A673 (cell line): ENCODE measurements at regions of chr5 and their contacts with region 1.

Region 1: GRCh38 chr5:140346348-140347101 is at the start of gene HBEGF:
- DNase-seq: peak; percentile 70
- H3K4me3 ChIP-seq: peak within 1 kb of the TSS; percentile 76
- H3K27ac ChIP-seq: peak within 1 kb of the TSS; percentile 57
- H3K4me1 ChIP-seq: peaks cover 34% of the 10 kb centered on the region
- H3K27me3 ChIP-seq: no peaks in the 10 kb centered on the region
- CTCF ChIP-seq: peak; percentile 37; the same call in 1 of the 2 replicates
- total RNA-seq, gene HBEGF: 12.0 and 14.7 TPM in 2 replicates

Region 2: DNA sequence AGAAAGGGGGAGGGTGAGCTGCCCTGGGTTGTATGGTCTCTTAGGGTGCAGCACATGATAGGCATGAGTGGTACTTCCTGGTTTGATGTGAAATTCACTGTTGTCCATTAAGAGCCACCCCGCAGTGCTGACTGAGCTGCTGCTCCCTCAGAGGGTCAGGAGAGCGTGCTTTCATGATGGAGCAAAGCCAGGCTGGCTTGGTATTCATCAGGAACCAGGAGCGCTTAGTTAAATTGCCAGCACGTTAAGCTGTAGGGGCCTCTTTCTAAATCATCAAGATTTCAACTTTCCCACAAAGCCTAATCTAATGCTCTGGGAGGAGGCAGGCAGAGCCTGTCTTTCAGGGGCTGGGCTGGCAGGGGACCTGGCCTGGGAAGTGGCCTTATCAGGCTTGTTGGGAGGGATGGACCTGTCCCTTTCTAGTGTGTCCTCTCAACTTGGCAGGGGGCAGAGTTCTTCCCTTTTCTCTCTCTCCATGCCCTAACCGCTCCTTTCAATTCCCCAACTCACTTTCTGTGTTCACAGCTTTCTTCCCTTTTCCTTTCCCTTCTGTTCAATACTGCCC is 163.6 kb before region 1 on chr5:
- CTCF ChIA-PET with region 1: no interaction called
- POLR2A ChIA-PET with region 1: no interaction called
- intact Hi-C with region 1: no loop called
- DNase-seq: peak; percentile 34
- H3K4me3 ChIP-seq: no peak overlapping the region
- H3K27ac ChIP-seq: no peak overlapping the region
- H3K4me1 ChIP-seq: peaks cover 16% of the 10 kb centered on the region
- H3K27me3 ChIP-seq: no peaks in the 10 kb centered on the region
- CTCF ChIP-seq: no peak

Region 3: GRCh38 chr5:140293091-140293848 is 53.3 kb before region 1 on chr5:
- CTCF ChIA-PET with region 1: no interaction called
- POLR2A ChIA-PET with region 1: no interaction called
- intact Hi-C with region 1: loop called (anchors 5 kb)
- DNase-seq: no peak
- H3K4me3 ChIP-seq: no peak overlapping the region
- H3K27ac ChIP-seq: peak overlapping the region; percentile 38
- H3K4me1 ChIP-seq: peaks cover 59% of the 10 kb centered on the region
- H3K27me3 ChIP-seq: no peaks in the 10 kb centered on the region
- CTCF ChIP-seq: no peak

Region 4: DNA sequence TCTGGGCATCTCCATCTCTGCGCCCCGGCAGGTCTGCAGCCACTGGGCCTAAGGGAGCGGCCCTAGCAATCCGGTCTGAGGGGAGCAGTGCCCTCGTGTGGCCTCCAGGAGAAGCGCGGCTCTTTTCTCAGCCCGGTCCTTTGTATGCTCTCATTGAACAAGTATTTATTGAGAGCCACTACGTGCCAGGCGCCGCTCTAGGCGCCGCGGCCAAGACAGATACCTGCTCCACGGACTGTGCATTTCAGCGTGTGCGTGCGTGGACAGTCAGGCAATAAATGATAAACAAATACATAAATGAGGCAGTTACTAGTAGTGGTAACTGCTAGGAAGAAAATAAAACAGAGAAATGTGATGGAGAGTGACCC is 11.2 kb after region 1 on chr5:
- CTCF ChIA-PET with region 1: interaction called, 17 read pairs
- POLR2A ChIA-PET with region 1: no interaction called
- intact Hi-C with region 1: no loop called
- DNase-seq: peak; percentile 88
- H3K4me3 ChIP-seq: peak overlapping the region; percentile 19
- H3K27ac ChIP-seq: no peak overlapping the region
- H3K4me1 ChIP-seq: peaks cover 3% of the 10 kb centered on the region
- H3K27me3 ChIP-seq: no peaks in the 10 kb centered on the region
- CTCF ChIP-seq: peak; percentile 96

Region 5: DNA sequence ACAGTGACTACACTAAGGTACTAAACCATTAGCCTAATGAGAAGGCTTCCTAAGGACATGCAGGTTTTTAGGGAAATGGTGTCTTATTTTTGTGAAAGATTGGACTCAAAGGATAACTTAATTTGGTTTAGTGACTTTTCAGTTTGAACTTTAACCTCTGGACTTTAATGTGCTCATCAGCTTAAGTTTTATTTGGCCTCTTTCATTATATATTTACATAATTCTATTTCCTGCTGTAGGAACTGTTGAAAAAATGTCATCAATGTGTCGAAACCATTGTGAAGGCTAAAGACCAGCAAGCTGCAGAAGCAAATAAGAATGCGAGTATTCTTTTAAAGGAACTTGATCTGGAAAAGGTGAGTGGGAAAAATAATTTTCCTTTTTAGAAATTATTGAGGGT is 166.6 kb after region 1 on chr5:
- CTCF ChIA-PET with region 1: no interaction called
- POLR2A ChIA-PET with region 1: no interaction called
- intact Hi-C with region 1: no loop called
- DNase-seq: no peak
- H3K4me3 ChIP-seq: no peak overlapping the region
- H3K27ac ChIP-seq: no peak overlapping the region
- H3K4me1 ChIP-seq: no peaks in the 10 kb centered on the region
- H3K27me3 ChIP-seq: no peaks in the 10 kb centered on the region
- CTCF ChIP-seq: no peak